CD14-positive monocyte (primary cell): ENCODE measurements at regions of chr2 and their contacts with region 1.

Region 1: GRCh38 chr2:136008205-136008865 is 22.9 kb upstream of the DARS1 start:
- DNase-seq: peak; percentile 98 to 99 (median 98)
- H3K4me3 ChIP-seq: peak overlapping the region in 1 of 3 experiments; percentile 14
- H3K4me3 Mint-ChIP-seq: peak overlapping the region; percentile 41 to 46
- H3K27ac ChIP-seq: peak overlapping the region; percentile 94 to 97
- H3K27ac Mint-ChIP-seq: peak overlapping the region; percentile 97 to 99 (median 99)
- H3K4me1 ChIP-seq: peaks cover 79 to 82% of the 10 kb centered on the region in 2 donors
- H3K4me1 Mint-ChIP-seq: peaks cover 75% of the 10 kb centered on the region
- H3K27me3 ChIP-seq: no peaks in the 10 kb centered on the region
- H3K27me3 Mint-ChIP-seq: peaks cover 0 to 2% (median 0%) of the 10 kb centered on the region in 3 donors
- CTCF ChIP-seq: no peak

Region 2: GRCh38 chr2:135829378-135830135 is 178.8 kb before region 1 on chr2:
- intact Hi-C with region 1: no loop called
- DNase-seq: no peak
- H3K4me3 ChIP-seq: no peak overlapping the region
- H3K4me3 Mint-ChIP-seq: no peak overlapping the region
- H3K27ac ChIP-seq: no peak overlapping the region
- H3K27ac Mint-ChIP-seq: no peak overlapping the region
- H3K4me1 ChIP-seq: no peaks in the 10 kb centered on the region
- H3K4me1 Mint-ChIP-seq: no peaks in the 10 kb centered on the region
- H3K27me3 ChIP-seq: no peaks in the 10 kb centered on the region
- H3K27me3 Mint-ChIP-seq: peaks cover 0 to 3% (median 2%) of the 10 kb centered on the region in 3 donors
- CTCF ChIP-seq: no peak

Region 3: GRCh38 chr2:135997380-135997779 is 11.0 kb before region 1 on chr2:
- intact Hi-C with region 1: loop called in 1 of 2 experiments (anchors 2 kb)
- DNase-seq: peak; percentile 47 to 65 (median 63)
- H3K4me3 ChIP-seq: no peak overlapping the region
- H3K4me3 Mint-ChIP-seq: peak overlapping the region in 1 of 2 donors; percentile 44
- H3K27ac ChIP-seq: peak overlapping the region; percentile 22 to 68
- H3K27ac Mint-ChIP-seq: peak overlapping the region; percentile 63 to 85 (median 73)
- H3K4me1 ChIP-seq: peaks cover 41 to 46% of the 10 kb centered on the region in 2 donors
- H3K4me1 Mint-ChIP-seq: peaks cover 45% of the 10 kb centered on the region
- H3K27me3 ChIP-seq: no peaks in the 10 kb centered on the region
- H3K27me3 Mint-ChIP-seq: peaks cover 0 to 2% (median 0%) of the 10 kb centered on the region in 3 donors
- CTCF ChIP-seq: peak; percentile 72

Region 4: GRCh38 chr2:136052369-136053362 is 44.3 kb after region 1 on chr2:
- intact Hi-C with region 1: loop called in 1 of 2 experiments (anchors 5 kb)
- DNase-seq: no peak
- H3K4me3 ChIP-seq: no peak overlapping the region
- H3K4me3 Mint-ChIP-seq: no peak overlapping the region
- H3K27ac ChIP-seq: no peak overlapping the region
- H3K27ac Mint-ChIP-seq: no peak overlapping the region
- H3K4me1 ChIP-seq: peaks cover 33 to 37% of the 10 kb centered on the region in 2 donors
- H3K4me1 Mint-ChIP-seq: peaks cover 53% of the 10 kb centered on the region
- H3K27me3 ChIP-seq: no peaks in the 10 kb centered on the region
- H3K27me3 Mint-ChIP-seq: no peaks in the 10 kb centered on the region
- CTCF ChIP-seq: no peak

Region 5: DNA sequence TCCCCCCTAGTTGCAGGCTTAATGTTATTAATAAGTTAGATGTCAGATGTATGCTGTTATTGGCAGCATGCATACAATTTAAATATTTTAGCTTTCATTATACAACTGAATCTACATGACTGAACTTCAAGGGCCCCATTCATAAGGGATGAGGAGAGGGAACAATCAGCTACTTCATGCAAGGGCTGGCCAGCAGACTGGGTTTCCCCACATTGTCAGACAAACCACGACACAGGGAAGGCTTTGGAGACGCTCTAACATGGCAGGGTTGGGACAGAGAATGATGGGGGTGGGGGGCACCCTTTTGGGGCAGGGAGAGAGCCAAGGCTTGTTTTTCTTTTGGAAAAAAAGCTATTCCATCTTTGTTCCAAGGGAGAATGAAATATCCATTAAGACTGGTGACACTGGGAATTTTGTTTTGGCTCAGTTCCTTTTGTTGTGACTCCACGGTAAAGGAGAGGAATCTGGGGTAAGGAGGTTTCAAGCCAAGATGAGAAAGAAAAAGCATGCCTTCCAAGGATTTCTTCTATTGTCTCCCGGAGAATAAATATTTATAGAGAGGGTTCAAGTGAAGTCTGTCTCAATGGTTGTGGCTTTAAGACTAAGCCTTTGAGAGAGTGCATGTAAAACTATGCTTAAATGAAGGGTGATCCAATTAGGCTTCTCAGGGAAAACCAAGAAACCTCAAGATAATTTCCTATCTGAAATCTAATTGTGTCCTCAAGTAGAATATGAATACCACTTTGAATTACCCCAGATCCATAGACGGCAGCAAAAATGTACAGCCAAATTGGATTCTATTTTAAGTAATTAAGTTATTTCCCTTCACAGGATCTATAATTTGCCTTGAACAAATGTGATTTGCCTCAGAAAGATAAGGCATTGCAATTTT is 104.2 kb after region 1 on chr2:
- intact Hi-C with region 1: loop called (anchors 5 kb)
- DNase-seq: peak in 2 of 3 donors; percentile 25 to 62
- H3K4me3 ChIP-seq: peak overlapping the region in 1 of 3 experiments; percentile 98
- H3K4me3 Mint-ChIP-seq: peak overlapping the region in 1 of 2 donors; percentile 92
- H3K27ac ChIP-seq: peak overlapping the region; percentile 72 to 95
- H3K27ac Mint-ChIP-seq: peak overlapping the region; percentile 94 to 97 (median 95)
- H3K4me1 ChIP-seq: peaks cover 61 to 63% of the 10 kb centered on the region in 2 donors
- H3K4me1 Mint-ChIP-seq: peaks cover 63% of the 10 kb centered on the region
- H3K27me3 ChIP-seq: no peaks in the 10 kb centered on the region
- H3K27me3 Mint-ChIP-seq: peaks cover 0 to 3% (median 0%) of the 10 kb centered on the region in 3 donors
- CTCF ChIP-seq: no peak

Region 6: GRCh38 chr2:136212423-136213378 is 204.4 kb after region 1 on chr2:
- intact Hi-C with region 1: loop called in 1 of 2 experiments (anchors 10 kb)
- DNase-seq: peak in 2 of 3 donors; percentile 41 to 42
- H3K4me3 ChIP-seq: no peak overlapping the region
- H3K4me3 Mint-ChIP-seq: no peak overlapping the region
- H3K27ac ChIP-seq: peak overlapping the region in 1 of 2 donors; percentile 96
- H3K27ac Mint-ChIP-seq: peak overlapping the region; percentile 93 to 99 (median 97)
- H3K4me1 ChIP-seq: peaks cover 72 to 91% of the 10 kb centered on the region in 2 donors
- H3K4me1 Mint-ChIP-seq: peaks cover 94% of the 10 kb centered on the region
- H3K27me3 ChIP-seq: no peaks in the 10 kb centered on the region
- H3K27me3 Mint-ChIP-seq: peaks cover 0 to 1% (median 0%) of the 10 kb centered on the region in 3 donors
- CTCF ChIP-seq: no peak

Region 7: GRCh38 chr2:136238286-136239078 is 230.1 kb after region 1 on chr2:
- intact Hi-C with region 1: loop called in 1 of 2 experiments (anchors 5 kb)
- DNase-seq: peak; percentile 93 to 98 (median 97)
- H3K4me3 ChIP-seq: no peak overlapping the region
- H3K4me3 Mint-ChIP-seq: peak overlapping the region in 1 of 2 donors; percentile 63
- H3K27ac ChIP-seq: peak overlapping the region; percentile 98 to 99
- H3K27ac Mint-ChIP-seq: peak overlapping the region; percentile 98 to 100 (median 99)
- H3K4me1 ChIP-seq: peaks cover 29 to 30% of the 10 kb centered on the region in 2 donors
- H3K4me1 Mint-ChIP-seq: peaks cover 55% of the 10 kb centered on the region
- H3K27me3 ChIP-seq: no peaks in the 10 kb centered on the region
- H3K27me3 Mint-ChIP-seq: peaks cover 0 to 9% (median 5%) of the 10 kb centered on the region in 3 donors
- CTCF ChIP-seq: no peak

Region 8: GRCh38 chr2:136327162-136327852 is 319.0 kb after region 1 on chr2:
- intact Hi-C with region 1: loop called in 1 of 2 experiments (anchors 10 kb)
- DNase-seq: peak in 2 of 3 donors; percentile 38 to 42
- H3K4me3 ChIP-seq: peak overlapping the region in 1 of 3 experiments; percentile 15
- H3K4me3 Mint-ChIP-seq: peak overlapping the region; percentile 53 to 59
- H3K27ac ChIP-seq: peak overlapping the region; percentile 27 to 59
- H3K27ac Mint-ChIP-seq: peak overlapping the region; percentile 43 to 88 (median 68)
- H3K4me1 ChIP-seq: peaks cover 56 to 60% of the 10 kb centered on the region in 2 donors
- H3K4me1 Mint-ChIP-seq: peaks cover 66% of the 10 kb centered on the region
- H3K27me3 ChIP-seq: no peaks in the 10 kb centered on the region
- H3K27me3 Mint-ChIP-seq: peaks cover 0 to 7% (median 0%) of the 10 kb centered on the region in 3 donors
- CTCF ChIP-seq: no peak